Activated CD4-positive, alpha-beta memory T cell treated with anti-CD3 and anti-CD28 coated beads, Interleukin-2, amount 10 ng/mL, durations not matched to agents 7 days and 5 days (primary cell): ENCODE measurements at regions of chr17 and their contacts with region 1.

Region 1: GRCh38 chr17:19362277-19363113 is at the start of gene B9D1:
- DNase-seq: peak; percentile 95
- H3K4me3 Mint-ChIP-seq: peak within 1 kb of the TSS; percentile 84
- H3K27ac Mint-ChIP-seq: peak within 1 kb of the TSS; percentile 63
- H3K4me1 Mint-ChIP-seq: peaks cover 26% of the 10 kb centered on the region
- H3K27me3 Mint-ChIP-seq: peaks cover 23% of the 10 kb centered on the region
- total RNA-seq, gene B9D1: 2.7 to 3.1 TPM

Region 2: DNA sequence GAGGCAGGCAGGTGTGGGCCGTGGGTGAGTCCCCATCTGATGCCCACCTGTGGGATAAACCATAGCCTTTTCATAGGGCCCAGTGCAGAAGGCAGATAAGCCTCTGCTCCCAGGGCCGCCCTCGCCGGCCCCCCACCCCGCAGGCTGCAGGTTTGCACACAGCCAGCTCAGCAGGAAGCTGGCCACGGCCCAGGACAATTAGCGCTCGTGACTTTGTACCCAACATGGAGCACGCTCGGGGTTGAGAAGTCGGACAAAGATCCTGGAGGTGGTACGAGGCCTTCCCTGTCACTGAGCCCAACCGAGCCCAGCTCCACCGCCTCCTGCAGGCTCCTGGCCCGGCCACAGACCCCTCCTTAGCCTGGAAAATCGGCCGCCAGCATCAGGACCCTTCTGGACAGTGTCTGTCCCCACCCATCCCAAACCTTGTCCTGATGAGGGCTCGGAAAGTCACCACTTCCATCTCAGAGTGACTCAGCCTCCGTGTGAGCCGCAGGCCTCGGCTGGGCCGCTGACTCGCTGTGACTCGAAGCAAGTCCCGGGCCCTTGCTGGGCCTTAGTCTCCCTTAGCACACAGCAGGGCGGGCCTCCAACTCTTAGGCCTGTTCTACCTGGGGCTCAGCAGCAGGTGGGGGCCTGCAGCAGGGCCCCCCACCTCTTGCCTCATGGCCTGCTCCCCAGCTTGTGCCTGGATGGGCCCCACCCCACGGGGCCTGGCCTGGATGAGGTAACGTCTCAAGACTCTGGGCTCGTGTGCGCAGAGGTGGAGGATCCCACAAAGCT is 380.7 kb before region 1 on chr17:
- CTCF ChIA-PET with region 1: no interaction called
- POLR2A ChIA-PET with region 1: no interaction called
- DNase-seq: no peak
- H3K4me3 Mint-ChIP-seq: no peak overlapping the region
- H3K27ac Mint-ChIP-seq: no peak overlapping the region
- H3K4me1 Mint-ChIP-seq: no peaks in the 10 kb centered on the region
- H3K27me3 Mint-ChIP-seq: no peaks in the 10 kb centered on the region

Region 3: GRCh38 chr17:19377602-19378392 is 15.3 kb after region 1 on chr17:
- CTCF ChIA-PET with region 1: interaction called, 71 read pairs
- POLR2A ChIA-PET with region 1: interaction called, 27 read pairs
- DNase-seq: peak; percentile 98
- H3K4me3 Mint-ChIP-seq: peak overlapping the region; percentile 92
- H3K27ac Mint-ChIP-seq: peak overlapping the region; percentile 98
- H3K4me1 Mint-ChIP-seq: peaks cover 44% of the 10 kb centered on the region
- H3K27me3 Mint-ChIP-seq: no peaks in the 10 kb centered on the region

Region 4: DNA sequence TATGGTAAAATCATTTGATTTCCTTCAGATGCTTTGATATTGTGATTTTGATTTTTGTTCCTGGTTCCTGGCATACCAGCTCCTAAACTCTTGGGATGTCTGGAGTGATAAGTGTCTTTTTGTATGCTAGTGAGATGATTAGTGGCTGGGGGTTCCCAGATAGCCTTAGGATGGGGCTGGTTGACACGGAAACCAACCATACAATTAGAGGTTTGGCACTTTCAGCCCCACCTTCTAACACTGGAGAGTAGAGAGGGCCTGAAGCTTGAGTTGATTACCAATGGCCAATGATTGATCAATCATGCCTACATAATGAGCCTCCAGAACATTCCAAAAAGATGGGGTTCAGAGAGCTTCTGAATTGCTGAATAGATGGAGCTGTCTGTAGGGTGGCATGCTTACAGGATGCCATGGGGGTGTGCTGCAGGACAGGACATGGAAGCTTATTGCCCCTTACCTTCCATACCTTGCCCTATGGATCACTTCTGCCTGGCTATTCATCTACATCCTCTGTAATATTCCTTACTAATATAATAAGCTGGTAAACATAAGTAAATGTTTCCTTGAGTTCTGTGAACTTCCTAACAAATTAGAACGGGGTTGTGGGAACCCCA is 71.3 kb after region 1 on chr17:
- CTCF ChIA-PET with region 1: interaction called, 11 read pairs
- POLR2A ChIA-PET with region 1: no interaction called
- DNase-seq: no peak
- H3K4me3 Mint-ChIP-seq: no peak overlapping the region
- H3K27ac Mint-ChIP-seq: no peak overlapping the region
- H3K4me1 Mint-ChIP-seq: no peaks in the 10 kb centered on the region
- H3K27me3 Mint-ChIP-seq: peaks cover 12% of the 10 kb centered on the region

Region 5: DNA sequence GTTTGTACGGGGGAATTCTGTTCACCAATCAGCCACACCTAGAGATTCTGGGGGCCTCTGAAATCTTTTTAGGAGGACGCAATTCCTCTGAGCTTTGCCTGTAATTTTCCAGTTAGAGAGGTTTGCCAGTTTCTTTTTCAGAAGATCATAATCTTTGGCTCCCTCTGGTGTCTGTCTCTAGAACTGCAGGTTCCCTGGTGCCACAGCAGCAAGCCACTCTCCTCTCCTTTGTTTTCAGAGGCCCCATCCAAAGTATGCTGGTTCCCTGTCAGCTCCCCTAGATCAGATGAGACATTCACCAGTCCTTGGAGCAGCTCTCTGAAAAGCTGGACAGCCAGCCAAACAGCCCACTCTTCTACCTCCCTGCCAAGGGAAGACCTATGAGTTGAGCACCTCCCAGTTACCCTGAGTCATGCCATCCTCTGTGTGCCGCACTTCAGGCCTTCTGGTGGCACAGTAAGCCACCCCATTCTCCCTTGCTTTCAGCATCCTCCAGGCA is 84.6 kb after region 1 on chr17:
- CTCF ChIA-PET with region 1: interaction called, 128 read pairs
- POLR2A ChIA-PET with region 1: interaction called, 5 read pairs
- DNase-seq: peak; percentile 66
- H3K4me3 Mint-ChIP-seq: no peak overlapping the region
- H3K27ac Mint-ChIP-seq: no peak overlapping the region
- H3K4me1 Mint-ChIP-seq: peaks cover 3% of the 10 kb centered on the region
- H3K27me3 Mint-ChIP-seq: peaks cover 33% of the 10 kb centered on the region

Region 6: DNA sequence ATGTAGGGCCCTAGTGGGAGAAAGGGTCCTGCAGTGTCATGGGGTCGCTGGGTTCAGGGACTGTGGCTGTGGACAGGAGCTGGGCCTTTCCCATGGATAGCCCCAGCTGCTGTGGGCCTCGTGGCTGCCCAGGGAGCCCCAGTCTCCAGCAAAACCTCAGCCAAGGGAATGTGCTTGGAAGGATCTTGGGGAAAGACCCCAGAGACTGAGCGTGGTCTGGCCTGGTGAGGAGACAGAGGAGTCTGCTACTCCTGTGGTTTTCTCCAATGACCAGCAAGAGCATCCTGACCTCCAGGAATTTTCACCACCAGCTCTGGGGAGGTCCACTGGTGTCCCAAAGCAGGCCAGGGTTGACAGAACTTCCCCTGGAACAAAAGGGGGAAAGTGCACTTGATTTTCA is 90.8 kb after region 1 on chr17:
- CTCF ChIA-PET with region 1: interaction called, 128 read pairs
- POLR2A ChIA-PET with region 1: interaction called, 5 read pairs
- DNase-seq: no peak
- H3K4me3 Mint-ChIP-seq: no peak overlapping the region
- H3K27ac Mint-ChIP-seq: no peak overlapping the region
- H3K4me1 Mint-ChIP-seq: no peaks in the 10 kb centered on the region
- H3K27me3 Mint-ChIP-seq: peaks cover 40% of the 10 kb centered on the region

Region 7: DNA sequence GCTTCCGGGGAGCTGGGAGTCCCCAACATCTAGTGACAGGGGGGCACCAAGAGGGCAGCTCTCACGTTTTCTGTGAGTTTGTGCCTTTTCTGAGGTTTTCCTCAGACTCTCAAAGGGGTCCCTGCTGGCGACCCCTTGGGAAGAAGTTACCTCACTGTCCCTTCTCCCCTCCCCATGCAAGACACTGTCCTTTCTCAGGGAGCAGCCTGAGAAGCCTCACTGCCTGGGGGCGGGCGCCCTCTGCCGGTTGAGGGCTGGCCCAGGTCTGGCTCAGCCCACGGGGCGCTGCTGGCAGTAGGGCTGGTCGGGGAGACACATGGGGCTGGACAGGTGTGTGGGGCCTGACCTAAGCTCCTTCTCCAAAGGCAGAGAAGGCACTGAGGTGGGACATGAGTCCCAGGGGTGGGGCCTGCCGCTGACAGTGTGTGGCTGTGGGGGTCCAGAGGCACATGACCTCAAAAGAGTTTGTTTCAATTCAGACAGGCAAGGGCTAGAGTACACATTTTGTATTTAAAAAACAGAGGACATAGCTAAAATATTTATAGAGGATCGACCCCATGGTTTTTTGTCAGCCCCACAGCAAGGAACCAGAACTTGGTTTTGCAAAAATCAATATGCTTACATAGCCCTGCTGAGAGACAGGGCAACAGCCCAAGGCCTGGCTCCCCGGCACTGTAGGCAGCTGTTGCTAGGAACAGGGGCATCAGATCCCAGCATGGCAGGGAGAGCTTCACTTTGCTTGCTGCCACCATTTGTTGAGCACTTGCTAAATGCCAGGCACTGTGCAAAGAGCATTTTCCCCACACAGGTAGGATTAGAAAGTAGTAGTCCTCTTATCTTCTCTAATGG is 404.2 kb after region 1 on chr17:
- CTCF ChIA-PET with region 1: interaction called, 14 read pairs
- POLR2A ChIA-PET with region 1: interaction called, 3 read pairs
- DNase-seq: peak; percentile 79
- H3K4me3 Mint-ChIP-seq: no peak overlapping the region
- H3K27ac Mint-ChIP-seq: no peak overlapping the region
- H3K4me1 Mint-ChIP-seq: peaks cover 34% of the 10 kb centered on the region
- H3K27me3 Mint-ChIP-seq: peaks cover 4% of the 10 kb centered on the region